GM12878 (cell line): ENCODE measurements at regions of chr17 and their contacts with region 1.

Region 1: GRCh38 chr17:48335858-48336500 is 94.0 kb downstream of the SKAP1 start:
- DNase-seq: peak; percentile 37
- ATAC-seq: peak; percentile 75
- H3K4me3 ChIP-seq: no peak overlapping the region
- H3K27ac ChIP-seq: no peak overlapping the region
- H3K4me1 ChIP-seq: peaks cover 10% of the 10 kb centered on the region; the same call in 1 of the 2 replicates
- H3K27me3 ChIP-seq: no peaks in the 10 kb centered on the region
- CTCF ChIP-seq: peak; percentile 59 to 72 (median 65)
- EP300 ChIP-seq: no peak
- POLR2A ChIP-seq: no peak
- RAD21 ChIP-seq: peak; percentile 79

Region 2: DNA sequence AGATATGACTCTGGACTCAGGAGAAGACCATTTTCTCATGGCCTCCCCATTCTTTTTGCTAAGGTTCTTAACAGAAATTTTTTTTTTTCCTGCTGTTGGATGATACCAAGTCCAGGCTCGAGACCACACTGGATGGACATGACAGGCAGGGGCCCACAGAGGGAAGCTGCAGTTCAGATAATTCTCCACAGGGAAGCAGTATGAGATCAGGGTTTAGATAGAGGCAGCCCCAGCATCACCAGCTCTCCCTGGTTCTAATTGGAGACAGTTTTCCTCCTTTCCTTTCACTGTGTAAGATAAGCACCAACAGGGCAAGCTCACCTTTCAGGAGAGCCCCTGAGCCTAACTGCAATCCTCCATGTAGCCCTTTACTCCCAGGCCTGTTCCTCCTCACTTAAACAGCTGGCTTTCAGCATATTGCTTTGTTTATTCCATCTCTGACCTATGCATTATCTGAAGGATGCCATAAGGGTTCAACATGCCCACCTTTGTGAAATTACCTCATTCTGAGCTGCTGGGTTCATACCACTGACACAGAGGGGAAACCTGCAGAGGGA is 120.3 kb before region 1 on chr17:
- CTCF ChIA-PET with region 1: interaction called, 17 read pairs
- POLR2A ChIA-PET with region 1: no interaction called
- RAD21 ChIA-PET with region 1: interaction called, 16 read pairs
- SMC1A ChIA-PET with region 1: interaction called, 3 read pairs
- in situ Hi-C with region 1: no loop called
- intact Hi-C with region 1: no loop called
- DNase-seq: no peak
- ATAC-seq: peak; percentile 63
- H3K4me3 ChIP-seq: no peak overlapping the region
- H3K27ac ChIP-seq: no peak overlapping the region
- H3K4me1 ChIP-seq: no peaks in the 10 kb centered on the region
- H3K27me3 ChIP-seq: no peaks in the 10 kb centered on the region
- CTCF ChIP-seq: peak; percentile 25 to 53 (median 50); a peak in 5 of 6 replicates
- EP300 ChIP-seq: no peak
- POLR2A ChIP-seq: no peak
- RAD21 ChIP-seq: peak; percentile 67

Region 3: GRCh38 chr17:48295362-48296288 is 40.4 kb before region 1 on chr17:
- CTCF ChIA-PET with region 1: interaction called, 31 read pairs
- POLR2A ChIA-PET with region 1: interaction called, 3 read pairs
- RAD21 ChIA-PET with region 1: interaction called, 10 read pairs
- SMC1A ChIA-PET with region 1: interaction called, 6 read pairs
- in situ Hi-C with region 1: no loop called
- intact Hi-C with region 1: no loop called
- DNase-seq: peak; percentile 47
- ATAC-seq: peak; percentile 77
- H3K4me3 ChIP-seq: peak overlapping the region; percentile 20
- H3K27ac ChIP-seq: peak overlapping the region; percentile 95
- H3K4me1 ChIP-seq: peaks cover 48% of the 10 kb centered on the region
- H3K27me3 ChIP-seq: no peaks in the 10 kb centered on the region
- CTCF ChIP-seq: no peak
- EP300 ChIP-seq: peak in 1 of 2 experiments; percentile 24; a peak in 1 of 4 replicates
- POLR2A ChIP-seq: no peak
- RAD21 ChIP-seq: no peak

Region 4: GRCh38 chr17:48363161-48363560 is 27.2 kb after region 1 on chr17:
- CTCF ChIA-PET with region 1: interaction called, 11 read pairs
- POLR2A ChIA-PET with region 1: interaction called, 3 read pairs
- RAD21 ChIA-PET with region 1: interaction called, 3 read pairs
- SMC1A ChIA-PET with region 1: interaction called, 3 read pairs
- in situ Hi-C with region 1: no loop called
- intact Hi-C with region 1: no loop called
- DNase-seq: no peak
- ATAC-seq: no peak
- H3K4me3 ChIP-seq: no peak overlapping the region
- H3K27ac ChIP-seq: no peak overlapping the region
- H3K4me1 ChIP-seq: no peaks in the 10 kb centered on the region
- H3K27me3 ChIP-seq: no peaks in the 10 kb centered on the region
- CTCF ChIP-seq: no peak
- EP300 ChIP-seq: no peak
- POLR2A ChIP-seq: no peak
- RAD21 ChIP-seq: no peak

Region 5: GRCh38 chr17:48457080-48457836 is 121.3 kb after region 1 on chr17:
- CTCF ChIA-PET with region 1: interaction called, 50 read pairs
- POLR2A ChIA-PET with region 1: no interaction called
- RAD21 ChIA-PET with region 1: interaction called, 5 read pairs
- SMC1A ChIA-PET with region 1: interaction called, 11 read pairs
- in situ Hi-C with region 1: no loop called
- intact Hi-C with region 1: loop called (anchors 5 kb)
- DNase-seq: no peak
- ATAC-seq: peak; percentile 93
- H3K4me3 ChIP-seq: peak overlapping the region; percentile 2; the same call in 1 of the 2 replicates
- H3K27ac ChIP-seq: no peak overlapping the region
- H3K4me1 ChIP-seq: peaks cover 34% of the 10 kb centered on the region
- H3K27me3 ChIP-seq: no peaks in the 10 kb centered on the region
- CTCF ChIP-seq: peak; percentile 96; a peak in 5 of 6 replicates
- EP300 ChIP-seq: no peak
- POLR2A ChIP-seq: no peak
- RAD21 ChIP-seq: peak; percentile 96

Region 6: DNA sequence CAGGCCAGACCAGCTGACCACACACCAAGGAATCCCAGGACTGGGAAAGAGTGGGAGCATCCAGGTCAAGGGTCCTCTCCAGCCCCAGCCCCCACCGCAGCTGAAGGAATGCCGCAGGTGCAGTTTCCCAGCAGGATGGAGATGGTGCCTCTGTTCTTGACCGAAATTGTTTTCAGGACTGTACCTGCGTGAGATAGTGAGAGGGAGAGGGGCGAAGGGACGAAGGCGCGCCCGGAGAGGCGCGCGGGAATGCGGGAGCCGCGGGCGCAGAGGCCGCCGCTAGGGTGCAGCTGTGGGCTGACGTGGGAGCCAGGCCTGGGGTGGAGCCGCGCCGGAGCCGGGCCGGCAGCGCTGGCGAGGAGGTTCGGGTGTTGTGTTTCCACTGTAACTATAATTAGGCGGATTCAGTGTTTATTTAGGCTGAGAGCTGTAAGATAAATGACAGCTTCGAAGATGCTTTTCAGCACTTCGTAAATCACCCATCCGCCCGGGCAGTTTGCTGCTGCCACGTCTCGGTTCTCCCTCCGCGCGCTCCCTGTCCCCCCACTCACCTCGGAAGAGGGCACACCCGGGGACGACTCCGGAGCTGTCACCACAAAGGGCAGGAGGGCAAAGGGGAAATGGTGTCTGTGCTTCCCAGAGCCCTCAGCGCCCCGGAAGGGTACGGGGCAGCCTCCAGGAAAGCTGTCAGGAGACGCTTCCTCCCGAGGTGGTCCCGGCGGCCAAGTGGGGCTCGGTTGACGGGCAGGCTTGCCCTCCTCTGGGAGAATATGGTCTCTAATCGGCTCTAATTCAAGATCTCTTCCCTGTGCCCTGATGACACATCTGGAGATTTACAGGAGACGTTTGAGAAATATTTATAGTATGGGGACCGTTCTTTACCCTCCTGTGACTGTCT is 156.7 kb after region 1 on chr17:
- CTCF ChIA-PET with region 1: interaction called, 35 read pairs
- POLR2A ChIA-PET with region 1: no interaction called
- RAD21 ChIA-PET with region 1: interaction called, 16 read pairs
- SMC1A ChIA-PET with region 1: interaction called, 5 read pairs
- in situ Hi-C with region 1: no loop called
- intact Hi-C with region 1: no loop called
- DNase-seq: no peak
- ATAC-seq: peak; percentile 98
- H3K4me3 ChIP-seq: peak overlapping the region; percentile 51; the same call in 1 of the 2 replicates
- H3K27ac ChIP-seq: no peak overlapping the region
- H3K4me1 ChIP-seq: peaks cover 20% of the 10 kb centered on the region
- H3K27me3 ChIP-seq: no peaks in the 10 kb centered on the region
- CTCF ChIP-seq: peak; percentile 84 to 94 (median 90)
- EP300 ChIP-seq: no peak
- POLR2A ChIP-seq: no peak
- RAD21 ChIP-seq: peak; percentile 79

Region 7: DNA sequence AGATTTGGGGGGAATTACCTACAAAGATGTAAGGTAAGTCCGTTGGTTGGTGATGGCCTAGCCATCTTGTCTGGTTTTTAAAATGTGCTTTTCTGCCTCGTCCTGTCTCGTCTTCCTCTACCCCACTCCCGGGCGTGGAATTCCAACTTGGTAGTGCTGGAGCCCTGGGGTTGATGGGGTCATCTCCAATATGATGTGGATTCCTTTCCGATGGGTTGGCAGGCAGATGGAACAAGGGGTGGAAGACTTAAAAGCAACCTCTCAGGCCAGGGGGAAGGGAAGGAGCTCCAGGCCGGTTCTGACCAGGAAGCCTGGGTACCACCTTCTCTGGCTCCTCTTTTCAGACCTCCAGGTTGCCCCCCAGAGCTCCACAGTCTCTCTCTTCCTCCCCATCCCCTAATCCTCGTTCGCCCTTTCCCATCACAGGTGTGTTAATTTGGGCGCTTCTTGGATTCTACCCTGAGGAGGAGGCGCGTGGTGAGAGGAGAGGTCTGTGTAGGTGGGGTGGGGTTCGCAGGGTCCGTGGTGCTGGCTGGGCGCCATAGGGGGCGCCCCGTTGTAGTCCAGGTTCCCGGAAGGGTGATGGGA is 214.0 kb after region 1 on chr17:
- CTCF ChIA-PET with region 1: no interaction called
- POLR2A ChIA-PET with region 1: no interaction called
- RAD21 ChIA-PET with region 1: no interaction called
- SMC1A ChIA-PET with region 1: no interaction called
- in situ Hi-C with region 1: no loop called
- intact Hi-C with region 1: no loop called
- DNase-seq: no peak
- ATAC-seq: no peak
- H3K4me3 ChIP-seq: no peak overlapping the region
- H3K27ac ChIP-seq: no peak overlapping the region
- H3K4me1 ChIP-seq: peaks cover 7% of the 10 kb centered on the region
- H3K27me3 ChIP-seq: no peaks in the 10 kb centered on the region
- CTCF ChIP-seq: no peak
- EP300 ChIP-seq: no peak
- POLR2A ChIP-seq: no peak
- RAD21 ChIP-seq: no peak

Region 8: DNA sequence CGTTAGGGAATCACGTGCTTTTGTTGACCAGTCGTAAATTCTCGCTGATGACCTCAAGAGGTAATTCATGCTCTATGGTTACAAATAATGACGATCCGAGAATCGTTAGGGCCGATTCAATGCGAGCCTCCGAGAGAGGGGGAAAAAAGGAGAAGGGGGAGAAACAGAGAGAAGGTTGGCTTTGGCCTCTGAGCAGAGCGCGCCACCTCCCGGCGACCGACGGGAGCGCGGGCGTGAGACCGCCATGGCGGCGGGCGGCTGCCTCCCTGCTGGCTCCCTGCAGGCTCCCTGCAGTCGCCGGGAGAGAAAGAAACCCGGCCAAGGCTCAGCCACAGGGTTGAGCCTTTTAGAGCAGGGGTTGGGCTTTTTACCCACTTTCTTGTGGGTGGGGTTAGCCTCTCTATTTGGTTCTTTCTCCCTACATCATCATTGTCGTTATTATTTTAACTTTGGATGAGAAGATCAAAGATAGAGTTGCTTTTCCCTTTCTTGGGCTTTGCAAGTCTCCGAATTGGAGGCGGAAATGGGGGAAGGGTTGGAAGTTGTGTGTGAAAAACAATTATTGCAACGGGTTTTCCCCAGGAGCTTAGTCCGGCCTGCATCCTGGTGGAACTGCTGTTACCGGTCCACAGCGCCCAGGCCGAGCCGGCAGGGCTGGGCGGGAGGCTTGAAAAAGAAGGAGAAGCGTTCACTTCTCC is 258.0 kb after region 1 on chr17:
- CTCF ChIA-PET with region 1: interaction called, 23 read pairs
- POLR2A ChIA-PET with region 1: no interaction called
- RAD21 ChIA-PET with region 1: interaction called, 29 read pairs
- SMC1A ChIA-PET with region 1: interaction called, 47 read pairs
- in situ Hi-C with region 1: no loop called
- intact Hi-C with region 1: loop called (anchors 2 kb)
- DNase-seq: no peak
- ATAC-seq: peak; percentile 75
- H3K4me3 ChIP-seq: no peak overlapping the region; the same call in 1 of the 2 replicates
- H3K27ac ChIP-seq: no peak overlapping the region
- H3K4me1 ChIP-seq: peaks cover 10% of the 10 kb centered on the region
- H3K27me3 ChIP-seq: peaks cover 5 to 33% of the 10 kb centered on the region in 2 experiments
- CTCF ChIP-seq: peak; percentile 91 to 97 (median 94)
- EP300 ChIP-seq: no peak
- POLR2A ChIP-seq: no peak
- RAD21 ChIP-seq: peak; percentile 80

Region 9: GRCh38 chr17:49022391-49022941 is 686.5 kb after region 1 on chr17:
- CTCF ChIA-PET with region 1: no interaction called
- POLR2A ChIA-PET with region 1: no interaction called
- RAD21 ChIA-PET with region 1: no interaction called
- SMC1A ChIA-PET with region 1: no interaction called
- in situ Hi-C with region 1: no loop called
- intact Hi-C with region 1: no loop called
- DNase-seq: no peak
- ATAC-seq: no peak
- H3K4me3 ChIP-seq: no peak overlapping the region
- H3K27ac ChIP-seq: no peak overlapping the region
- H3K4me1 ChIP-seq: no peaks in the 10 kb centered on the region
- H3K27me3 ChIP-seq: no peaks in the 10 kb centered on the region; a peak in 2 of 4 replicates
- CTCF ChIP-seq: no peak
- EP300 ChIP-seq: no peak
- POLR2A ChIP-seq: no peak
- RAD21 ChIP-seq: no peak